Naive thymus-derived CD8-positive, alpha-beta T cell (primary cell): ENCODE measurements at regions of chr9 and their contacts with region 1.

Region 1: GRCh38 chr9:35664531-35665470 is at the start of gene ARHGEF39:
- DNase-seq: peak; percentile 34 to 76 (median 58)
- ATAC-seq: peak; percentile 79 to 83
- H3K4me3 Mint-ChIP-seq: peak within 1 kb of the TSS; percentile 75 to 89 (median 84)
- H3K27ac Mint-ChIP-seq: peak within 1 kb of the TSS; percentile 57 to 99 (median 82)
- H3K4me1 Mint-ChIP-seq: peaks cover 32 to 65% (median 62%) of the 10 kb centered on the region in 4 donors
- H3K27me3 Mint-ChIP-seq: peaks cover 0 to 2% (median 0%) of the 10 kb centered on the region in 5 donors
- polyA plus RNA-seq, gene ARHGEF39: 0.13 to 0.25 (median 0.24) TPM

Region 2: GRCh38 chr9:35690431-35691333 is 25.9 kb after region 1 on chr9:
- POLR2A ChIA-PET with region 1: interaction called, 19 read pairs
- DNase-seq: peak in 7 of 10 donors; percentile 17 to 39 (median 30)
- ATAC-seq: peak; percentile 63 to 71
- H3K4me3 Mint-ChIP-seq: peak overlapping the region; percentile 86 to 94 (median 88)
- H3K27ac Mint-ChIP-seq: peak overlapping the region; percentile 29 to 87 (median 78)
- H3K4me1 Mint-ChIP-seq: peaks cover 11 to 27% (median 21%) of the 10 kb centered on the region in 4 donors
- H3K27me3 Mint-ChIP-seq: no peaks in the 10 kb centered on the region

Region 3: GRCh38 chr9:35711501-35712428 is 47.0 kb after region 1 on chr9:
- POLR2A ChIA-PET with region 1: no interaction called
- DNase-seq: no peak
- ATAC-seq: no peak
- H3K4me3 Mint-ChIP-seq: no peak overlapping the region
- H3K27ac Mint-ChIP-seq: peak overlapping the region in 1 of 10 donors; percentile 78
- H3K4me1 Mint-ChIP-seq: peaks cover 0 to 13% (median 2%) of the 10 kb centered on the region in 4 donors
- H3K27me3 Mint-ChIP-seq: no peaks in the 10 kb centered on the region